Astrocyte of the cerebellum (primary cell): ENCODE measurements at regions of chr2 and their contacts with region 1.

Region 1: DNA sequence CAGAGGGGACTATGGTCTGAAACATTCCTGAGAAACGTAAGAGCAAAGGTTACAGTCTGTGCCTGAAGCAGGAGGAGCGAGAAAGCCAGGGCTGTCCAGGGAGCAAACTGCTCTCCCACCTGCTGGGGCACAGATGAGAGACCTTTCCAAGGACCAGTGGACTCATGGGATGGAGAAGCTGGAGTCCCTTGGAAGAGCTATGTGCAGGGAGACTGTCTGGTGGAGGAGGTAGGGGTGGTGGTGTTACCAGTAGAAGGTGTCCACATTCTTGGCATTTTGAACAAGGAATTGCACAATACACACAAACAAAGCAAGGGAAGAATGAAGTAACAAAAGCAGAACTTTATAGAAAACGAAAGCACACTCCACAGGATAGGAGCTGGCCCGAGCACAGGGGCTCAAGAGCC is 97.9 kb upstream of the CYRIA start:
- DNase-seq: no peak
- H3K4me3 ChIP-seq: no peak overlapping the region
- CTCF ChIP-seq: no peak

Region 2: GRCh38 chr2:16487686-16488085 is 275.8 kb before region 1 on chr2:
- in situ Hi-C with region 1: no loop called
- DNase-seq: peak; percentile 5
- H3K4me3 ChIP-seq: no peak overlapping the region
- CTCF ChIP-seq: peak; percentile 38

Region 3: GRCh38 chr2:17309741-17310339 is 546.3 kb after region 1 on chr2:
- in situ Hi-C with region 1: loop called (anchors 10 kb)
- DNase-seq: peak; percentile 49
- H3K4me3 ChIP-seq: no peak overlapping the region
- CTCF ChIP-seq: peak; percentile 74